ENCODE measurements at regions of chr9 and their contacts with region 1.

Region 1: DNA sequence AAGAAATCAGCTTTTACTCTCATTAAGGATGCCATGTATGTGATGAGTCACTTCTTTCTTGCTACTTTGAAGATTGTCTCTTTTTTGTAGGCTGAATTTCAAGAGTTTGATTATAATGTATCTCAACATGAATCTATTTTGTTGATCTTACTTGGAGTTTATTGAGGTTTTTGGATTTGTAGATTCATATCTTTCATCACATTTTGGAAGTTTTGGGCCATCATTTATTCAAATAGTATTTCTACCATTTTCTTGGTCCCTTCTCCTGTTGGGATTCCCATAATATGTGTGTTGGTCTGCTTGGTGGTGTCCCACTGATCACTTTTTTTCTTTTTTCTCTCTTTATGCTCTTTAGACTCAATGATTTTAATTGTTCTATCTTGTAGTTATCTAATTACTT is 116.3 kb downstream of the CNTLN start:
- DNase-seq: no peak
- ATAC-seq: no peak
- H3K4me3 ChIP-seq: no peak overlapping the region
- H3K4me3 Mint-ChIP-seq: no peak overlapping the region
- H3K27ac ChIP-seq: no peak overlapping the region
- H3K27ac Mint-ChIP-seq: no peak overlapping the region
- H3K4me1 ChIP-seq: no peaks in the 10 kb centered on the region
- H3K4me1 Mint-ChIP-seq: no peaks in the 10 kb centered on the region
- H3K27me3 ChIP-seq: no peaks in the 10 kb centered on the region
- H3K27me3 Mint-ChIP-seq: no peaks in the 10 kb centered on the region
- CTCF ChIP-seq: no peak

Region 2: DNA sequence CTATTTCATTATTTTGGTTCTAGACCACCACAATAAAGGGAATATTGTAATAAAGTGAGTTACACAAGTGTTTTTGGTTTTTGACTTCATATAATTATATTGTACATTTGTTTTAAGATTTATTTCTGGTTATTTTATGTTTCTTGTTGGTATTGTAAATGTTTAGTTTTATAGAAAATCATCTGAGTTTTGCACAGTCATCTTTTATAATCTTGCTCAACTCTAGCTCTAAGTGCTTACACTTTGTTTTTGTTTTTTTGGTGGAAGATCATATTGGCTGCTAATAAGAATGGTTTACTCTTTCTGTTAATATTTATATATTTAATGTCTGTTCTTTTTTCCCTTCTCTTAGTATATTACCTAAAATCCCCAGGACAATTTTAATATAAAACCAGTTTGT is 18.7 kb after region 1 on chr9:
- CTCF ChIA-PET with region 1: interaction called, 4 read pairs
- POLR2A ChIA-PET with region 1: no interaction called
- intact Hi-C with region 1: loop called in 1 of 2 experiments (anchors 1 kb)
- DNase-seq: no peak
- ATAC-seq: no peak
- H3K4me3 ChIP-seq: no peak overlapping the region
- H3K4me3 Mint-ChIP-seq: no peak overlapping the region
- H3K27ac ChIP-seq: no peak overlapping the region
- H3K27ac Mint-ChIP-seq: no peak overlapping the region
- H3K4me1 ChIP-seq: no peaks in the 10 kb centered on the region
- H3K4me1 Mint-ChIP-seq: no peaks in the 10 kb centered on the region
- H3K27me3 ChIP-seq: no peaks in the 10 kb centered on the region
- H3K27me3 Mint-ChIP-seq: no peaks in the 10 kb centered on the region
- CTCF ChIP-seq: no peak

Measured in CD4-positive, alpha-beta T cell (primary cell).